ENCODE measurements at regions of chr2 and their contacts with region 1.

Region 1: DNA sequence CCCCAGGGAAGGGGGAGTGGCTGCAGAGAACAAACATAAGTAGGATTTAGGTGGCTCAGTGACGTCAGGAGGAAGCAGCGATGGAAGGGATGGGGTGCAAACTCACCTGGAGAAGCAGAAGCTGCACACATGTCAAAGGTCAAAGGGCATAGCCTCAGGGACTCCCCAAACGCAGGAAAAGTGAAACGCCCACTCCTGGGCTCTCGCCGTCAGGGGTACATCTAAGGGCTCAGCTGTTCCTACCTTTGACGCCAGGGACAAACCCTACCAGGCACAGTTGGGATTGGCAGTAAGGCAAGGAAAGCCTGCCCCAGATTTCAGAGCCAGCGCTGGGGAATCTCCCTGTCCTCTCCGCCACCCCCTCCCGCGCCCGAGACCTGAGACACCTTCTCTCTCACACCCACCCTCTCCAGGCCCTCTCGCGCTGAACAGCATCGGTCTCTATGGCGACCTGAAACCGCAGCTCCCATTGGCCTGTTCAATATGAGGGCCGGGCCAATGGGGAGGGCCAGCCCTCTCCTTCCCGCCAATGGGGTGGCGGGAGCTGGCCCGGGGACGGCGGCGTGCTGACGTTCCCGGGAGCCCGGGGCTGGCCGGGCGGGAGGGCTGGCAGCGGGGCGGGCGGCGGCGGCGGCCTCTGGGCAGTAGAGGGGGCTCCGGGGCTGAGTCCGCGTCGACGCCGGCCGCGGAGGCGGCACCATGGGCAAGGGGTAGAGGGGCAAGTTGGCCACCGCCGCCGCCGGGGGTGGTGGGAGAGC is at the starts of genes CCDC148 and PKP4:
- DNase-seq: peak; percentile 81 to 96 (median 92)
- H3K4me3 ChIP-seq: peak within 1 kb of the TSS; percentile 59 to 98 (median 87)
- H3K27ac ChIP-seq: peak within 1 kb of the TSS; percentile 54 to 99 (median 95)
- H3K27me3 ChIP-seq: no peaks in the 10 kb centered on the region
- CTCF ChIP-seq: peak in 20 of 56 donors; percentile 3 to 53 (median 21)
- total RNA-seq, gene CCDC148: 4.8 to 15.3 (median 8.3) TPM
- total RNA-seq, gene PKP4: 163 to 459 (median 237) TPM

Region 2: GRCh38 chr2:158507166-158507565 is 50.7 kb after region 1 on chr2:
- intact Hi-C with region 1: no loop called
- DNase-seq: no peak
- H3K4me3 ChIP-seq: no peak overlapping the region
- H3K27ac ChIP-seq: no peak overlapping the region
- H3K27me3 ChIP-seq: no peaks in the 10 kb centered on the region
- CTCF ChIP-seq: no peak

Region 3: DNA sequence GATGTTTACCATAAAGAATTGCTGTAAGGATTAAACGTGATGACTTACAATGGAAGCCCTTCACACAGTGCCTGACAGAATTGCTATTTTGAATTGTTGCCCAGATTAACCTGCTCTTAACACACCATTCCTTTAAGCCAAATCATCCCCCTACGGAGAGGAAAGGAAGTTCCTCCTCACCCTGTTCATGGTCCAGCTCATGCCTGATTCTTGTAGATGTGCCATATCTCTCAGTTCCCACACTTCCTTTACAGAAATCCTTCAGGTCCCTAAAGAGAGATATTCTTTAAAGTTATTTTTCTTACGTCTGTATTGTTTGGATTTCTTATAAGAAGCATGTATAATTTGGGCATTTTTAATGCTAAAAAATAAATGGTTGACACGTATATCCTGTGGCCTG is 211.1 kb after region 1 on chr2:
- intact Hi-C with region 1: loop called in 1 of 2 experiments (anchors 10 kb)
- DNase-seq: no peak
- H3K4me3 ChIP-seq: no peak overlapping the region
- H3K27ac ChIP-seq: peak overlapping the region in 23 of 59 donors; percentile 2 to 73 (median 32)
- H3K27me3 ChIP-seq: no peaks in the 10 kb centered on the region
- CTCF ChIP-seq: no peak

Region 4: GRCh38 chr2:158753641-158754611 is 297.4 kb after region 1 on chr2:
- intact Hi-C with region 1: loop called (anchors 5 kb)
- DNase-seq: peak in 3 of 10 donors; percentile 25 to 62 (median 60)
- H3K4me3 ChIP-seq: peak overlapping the region in 55 of 59 donors; percentile 11 to 64 (median 40)
- H3K27ac ChIP-seq: peak overlapping the region in 29 of 59 donors; percentile 2 to 83 (median 37)
- H3K27me3 ChIP-seq: no peaks in the 10 kb centered on the region
- CTCF ChIP-seq: peak; percentile 87 to 98 (median 94)

Region 5: GRCh38 chr2:159053161-159054031 is 596.9 kb after region 1 on chr2:
- intact Hi-C with region 1: no loop called
- DNase-seq: no peak
- H3K4me3 ChIP-seq: no peak overlapping the region
- H3K27ac ChIP-seq: peak overlapping the region in 29 of 59 donors; percentile 3 to 72 (median 34)
- H3K27me3 ChIP-seq: no peaks in the 10 kb centered on the region
- CTCF ChIP-seq: no peak

Measured in dorsolateral prefrontal cortex (tissue), 120 donors.